ENCODE measurements at regions of chr6 and their contacts with region 1.

Region 1: DNA sequence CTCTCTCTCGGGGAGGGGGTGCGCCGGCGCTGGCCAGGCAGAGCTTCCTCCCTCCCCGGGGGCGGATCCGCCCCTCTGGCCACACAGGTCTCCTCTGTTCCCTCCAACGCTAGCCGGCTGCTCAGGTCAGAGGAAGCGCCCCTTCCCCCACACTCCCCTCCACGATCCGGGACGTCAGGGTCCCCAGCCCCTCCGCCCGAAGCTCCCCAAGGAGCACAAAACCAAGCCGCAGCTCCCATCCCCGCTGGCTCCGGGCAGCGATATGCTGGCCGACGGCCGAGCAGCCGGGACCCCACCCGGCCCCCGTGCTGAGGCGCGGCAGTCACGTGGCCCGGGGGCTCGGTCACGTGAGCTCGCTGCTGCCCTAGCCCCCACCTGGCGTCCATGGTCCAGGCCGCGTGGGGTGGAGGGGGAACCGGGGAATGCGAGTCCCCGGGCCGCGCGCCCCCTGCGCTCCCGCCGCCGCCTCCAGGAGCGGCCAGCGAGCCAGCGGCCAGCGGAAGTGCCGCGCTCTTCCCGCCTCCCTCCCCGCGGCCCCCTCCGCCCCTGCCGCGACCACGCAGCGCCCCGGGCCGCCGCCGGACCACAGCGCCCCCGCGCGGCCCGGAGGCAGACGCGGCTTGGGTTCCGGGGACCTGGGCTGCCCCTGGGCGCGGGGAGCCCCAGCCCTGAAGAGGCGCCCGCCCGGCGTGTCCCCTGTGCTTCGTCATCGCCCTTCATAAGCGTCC is at the start of gene SLC35B2:
- DNase-seq: peak; percentile 72
- ATAC-seq: peak; percentile 63
- H3K4me3 ChIP-seq: peak within 1 kb of the TSS; percentile 81
- H3K27ac ChIP-seq: peak within 1 kb of the TSS; percentile 71
- H3K4me1 ChIP-seq: peaks cover 17% of the 10 kb centered on the region
- H3K27me3 ChIP-seq: no peaks in the 10 kb centered on the region
- CTCF ChIP-seq: peak; percentile 62
- total RNA-seq, gene SLC35B2: 90.6 and 109 TPM in 2 replicates

Region 2: GRCh38 chr6:44172731-44173500 is 84.3 kb before region 1 on chr6:
- CTCF ChIA-PET with region 1: no interaction called
- POLR2A ChIA-PET with region 1: no interaction called
- intact Hi-C with region 1: loop called (anchors 1 kb)
- DNase-seq: peak; percentile 89
- ATAC-seq: peak; percentile 99
- H3K4me3 ChIP-seq: no peak overlapping the region
- H3K27ac ChIP-seq: no peak overlapping the region
- H3K4me1 ChIP-seq: no peaks in the 10 kb centered on the region
- H3K27me3 ChIP-seq: no peaks in the 10 kb centered on the region
- CTCF ChIP-seq: peak; percentile 97

Region 3: GRCh38 chr6:44221291-44221960 is 35.8 kb before region 1 on chr6:
- CTCF ChIA-PET with region 1: interaction called, 15 read pairs
- POLR2A ChIA-PET with region 1: interaction called, 24 read pairs
- intact Hi-C with region 1: no loop called
- DNase-seq: peak; percentile 81
- ATAC-seq: peak; percentile 45
- H3K4me3 ChIP-seq: no peak overlapping the region
- H3K27ac ChIP-seq: no peak overlapping the region
- H3K4me1 ChIP-seq: peaks cover 29% of the 10 kb centered on the region
- H3K27me3 ChIP-seq: no peaks in the 10 kb centered on the region
- CTCF ChIP-seq: peak; percentile 78

Region 4: DNA sequence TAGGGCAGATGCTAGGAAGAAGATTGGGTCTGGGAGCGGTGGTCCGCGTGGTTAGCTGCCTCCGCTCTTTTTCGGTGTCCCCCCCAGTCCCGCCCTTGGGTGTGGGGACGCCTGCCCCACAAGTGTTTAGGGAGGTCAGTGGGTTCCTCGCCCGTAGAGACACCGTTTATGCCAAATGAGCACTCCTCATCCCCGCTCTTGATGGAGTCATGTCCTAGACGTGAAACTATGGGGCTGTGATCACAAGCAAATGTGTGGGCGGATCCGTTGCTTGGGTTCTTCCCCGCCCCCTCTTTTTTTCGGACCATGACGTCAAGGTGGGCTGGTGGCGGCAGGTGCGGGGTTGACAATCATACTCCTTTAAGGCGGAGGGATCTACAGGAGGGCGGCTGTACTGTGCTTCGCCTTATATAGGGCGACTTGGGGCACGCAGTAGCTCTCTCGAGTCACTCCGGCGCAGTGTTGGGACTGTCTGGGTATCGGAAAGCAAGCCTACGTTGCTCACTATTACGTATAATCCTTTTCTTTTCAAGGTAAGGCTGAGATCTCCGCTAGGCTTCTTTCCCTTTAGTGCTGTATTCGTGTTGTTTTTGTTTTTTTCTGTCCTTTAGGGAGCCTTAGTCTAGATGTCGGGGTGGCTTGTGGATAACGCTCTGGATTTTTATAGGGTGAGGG is 10.4 kb before region 1 on chr6 and contains the start of gene HSP90AB1:
- CTCF ChIA-PET with region 1: interaction called, 6 read pairs
- POLR2A ChIA-PET with region 1: interaction called, 10 read pairs
- intact Hi-C with region 1: no loop called
- DNase-seq: peak; percentile 98
- ATAC-seq: peak; percentile 73
- H3K4me3 ChIP-seq: peak within 1 kb of the TSS; percentile 99
- H3K27ac ChIP-seq: peak within 1 kb of the TSS; percentile 61
- H3K4me1 ChIP-seq: peaks cover 39% of the 10 kb centered on the region
- H3K27me3 ChIP-seq: no peaks in the 10 kb centered on the region
- CTCF ChIP-seq: no peak
- total RNA-seq, gene HSP90AB1: 1,280 and 1,322 TPM in 2 replicates